Tibial artery (tissue), 4 donors: ENCODE measurements at regions of chr11 and their contacts with region 1.

Region 1: DNA sequence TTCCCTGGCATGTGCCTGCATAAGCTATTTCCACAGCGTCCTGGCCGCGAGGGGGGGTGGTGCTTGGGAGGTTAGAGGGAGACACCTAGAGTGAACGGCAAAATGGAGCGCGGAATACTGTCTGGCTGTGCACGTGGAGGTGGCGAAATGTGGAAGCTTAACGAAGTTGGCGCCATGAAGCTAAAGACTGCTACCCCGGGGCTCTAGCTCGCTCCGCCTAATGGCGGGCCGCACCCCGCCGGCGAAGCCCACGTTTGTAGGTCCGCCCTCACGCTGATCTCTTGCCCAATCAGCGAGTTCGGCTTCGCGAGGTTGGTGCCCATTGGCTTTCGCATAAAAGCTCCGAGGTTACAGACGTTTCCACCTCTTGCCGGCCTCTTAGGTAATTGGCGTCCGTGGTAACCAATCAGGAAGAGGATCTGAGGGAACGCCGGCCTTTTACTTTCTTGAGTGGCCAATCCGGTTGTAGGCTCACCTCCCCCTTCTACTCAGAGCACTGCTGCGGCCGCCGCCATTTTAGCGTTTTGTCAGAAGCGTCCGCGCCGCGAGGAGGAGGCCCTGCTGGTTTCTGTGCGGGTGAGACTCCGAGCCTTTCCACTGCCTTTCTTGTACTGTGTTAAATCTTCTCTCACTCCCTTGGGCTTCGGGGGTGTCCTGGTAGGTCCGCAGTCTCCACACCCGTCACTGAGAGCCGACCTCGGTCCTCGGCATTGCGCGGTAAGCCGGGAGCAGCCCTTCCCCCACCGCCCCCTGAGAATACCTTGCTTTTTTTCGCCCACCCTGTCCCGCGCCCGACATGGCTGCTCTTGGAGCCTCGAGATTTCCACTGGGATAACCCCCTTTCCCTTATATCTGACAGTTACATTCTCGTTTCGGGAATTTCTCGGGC is at the start of gene RBM4:
- DNase-seq: peak; percentile 98 to 99
- H3K4me3 ChIP-seq: peak within 1 kb of the TSS; percentile 80 to 82
- H3K27ac ChIP-seq: peak within 1 kb of the TSS; percentile 91 to 93
- H3K4me1 ChIP-seq: peaks cover 4 to 56% (median 48%) of the 10 kb centered on the region in 4 donors
- H3K27me3 ChIP-seq: no peaks in the 10 kb centered on the region
- CTCF ChIP-seq: peak in 1 of 2 experiments; percentile 29

Region 2: DNA sequence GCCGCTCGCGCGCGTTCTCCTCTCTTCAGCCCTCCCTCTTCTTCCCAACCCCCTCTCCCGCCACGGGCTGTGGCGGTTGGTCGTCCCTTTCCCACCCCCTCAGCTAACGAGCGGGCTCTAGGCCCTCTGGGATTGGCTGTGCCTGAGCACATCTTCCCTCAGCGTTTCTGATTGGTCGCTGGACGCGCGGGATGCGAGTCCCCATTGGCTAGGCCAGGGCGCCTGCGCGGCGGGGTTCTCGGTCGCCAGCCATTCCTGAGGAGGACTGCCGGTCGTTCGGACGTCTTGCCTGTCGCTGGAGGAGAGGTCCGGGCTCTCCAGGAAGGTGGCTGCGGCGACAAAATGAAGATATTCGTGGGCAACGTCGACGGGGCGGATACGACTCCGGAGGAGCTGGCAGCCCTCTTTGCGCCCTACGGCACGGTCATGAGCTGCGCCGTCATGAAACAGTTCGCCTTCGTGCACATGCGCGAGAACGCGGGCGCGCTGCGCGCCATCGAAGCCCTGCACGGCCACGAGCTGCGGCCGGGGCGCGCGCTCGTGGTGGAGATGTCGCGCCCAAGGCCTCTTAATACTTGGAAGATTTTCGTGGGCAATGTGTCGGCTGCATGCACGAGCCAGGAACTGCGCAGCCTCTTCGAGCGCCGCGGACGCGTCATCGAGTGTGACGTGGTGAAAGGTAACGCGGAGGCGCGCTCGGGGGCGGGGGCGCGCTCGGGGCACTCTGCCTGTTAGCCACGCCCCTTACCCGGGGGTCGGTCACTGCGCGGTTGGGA is 21.9 kb before region 1 on chr11 and contains the start of gene RBM14:
- intact Hi-C with region 1: loop called (anchors 2 kb)
- DNase-seq: peak; percentile 98 to 100
- H3K4me3 ChIP-seq: peak within 1 kb of the TSS; percentile 88 to 92
- H3K27ac ChIP-seq: peak within 1 kb of the TSS; percentile 96
- H3K4me1 ChIP-seq: peaks cover 0 to 51% (median 32%) of the 10 kb centered on the region in 4 donors
- H3K27me3 ChIP-seq: no peaks in the 10 kb centered on the region
- CTCF ChIP-seq: no peak